CD4-positive, alpha-beta memory T cell (primary cell): ENCODE measurements at regions of chr2 and their contacts with region 1.

Region 1: DNA sequence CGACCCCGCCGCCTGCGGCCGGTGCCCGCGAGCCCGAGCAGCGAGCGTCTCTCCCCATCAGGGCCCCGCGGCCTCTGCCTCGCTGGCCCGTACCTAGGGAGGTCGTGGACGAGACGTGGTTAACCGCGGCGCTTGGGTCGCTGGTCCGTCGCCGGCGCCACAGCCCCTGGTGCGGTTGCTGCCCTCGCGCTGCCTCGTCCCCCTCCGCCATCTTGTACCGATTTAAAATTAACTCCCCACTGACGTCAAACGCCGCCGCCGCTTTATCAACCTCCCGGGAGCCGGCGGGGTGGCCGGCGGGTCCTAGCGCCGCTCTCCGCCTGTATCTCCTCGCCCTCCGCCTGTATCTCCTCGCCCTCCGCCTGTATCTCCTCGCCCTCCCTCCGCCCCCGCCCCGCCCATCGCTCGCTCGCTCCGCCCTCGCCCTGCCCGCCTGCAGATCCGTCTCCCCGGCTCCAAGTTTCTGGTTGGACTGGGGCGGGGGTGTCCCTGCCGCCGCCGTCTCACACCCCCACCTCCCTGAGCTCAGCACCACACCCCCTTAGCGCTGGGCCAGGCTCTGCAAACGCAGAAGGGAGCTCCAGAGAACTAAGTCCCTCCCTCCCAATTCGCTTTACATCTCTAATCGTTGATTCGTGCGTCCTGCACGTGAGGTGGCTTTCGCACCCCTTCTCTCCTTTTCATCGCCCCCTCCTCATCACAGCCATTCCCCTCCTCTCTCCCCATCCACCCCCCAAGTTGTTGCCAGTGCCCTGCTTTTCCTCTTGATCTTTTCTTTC is at the start of gene ATL2:
- DNase-seq: peak; percentile 91 to 97 (median 94)
- H3K4me3 ChIP-seq: peak within 1 kb of the TSS; percentile 67 to 85
- H3K4me3 Mint-ChIP-seq: peak within 1 kb of the TSS; percentile 93 to 100 (median 96)
- H3K27ac ChIP-seq: peak within 1 kb of the TSS; percentile 89
- H3K27ac Mint-ChIP-seq: peak within 1 kb of the TSS; percentile 90 to 98 (median 97)
- H3K4me1 ChIP-seq: peaks cover 63% of the 10 kb centered on the region
- H3K4me1 Mint-ChIP-seq: peaks cover 45 to 81% (median 65%) of the 10 kb centered on the region in 4 donors
- H3K27me3 ChIP-seq: no peaks in the 10 kb centered on the region
- H3K27me3 Mint-ChIP-seq: no peaks in the 10 kb centered on the region
- total RNA-seq, gene ATL2: 51.5 to 64.3 TPM

Region 2: GRCh38 chr2:37324786-37325624 is 1052.2 kb before region 1 on chr2 and contains the start of gene PRKD3:
- CTCF ChIA-PET with region 1: no interaction called
- POLR2A ChIA-PET with region 1: no interaction called
- intact Hi-C with region 1: loop called (anchors 10 kb)
- DNase-seq: peak; percentile 70 to 74 (median 73)
- H3K4me3 ChIP-seq: peak within 1 kb of the TSS; percentile 72 to 85
- H3K4me3 Mint-ChIP-seq: peak within 1 kb of the TSS; percentile 97 to 99 (median 98)
- H3K27ac ChIP-seq: peak within 1 kb of the TSS; percentile 39
- H3K27ac Mint-ChIP-seq: peak within 1 kb of the TSS; percentile 93 to 98 (median 98)
- H3K4me1 ChIP-seq: peaks cover 36% of the 10 kb centered on the region
- H3K4me1 Mint-ChIP-seq: peaks cover 19 to 44% (median 27%) of the 10 kb centered on the region in 4 donors
- H3K27me3 ChIP-seq: no peaks in the 10 kb centered on the region
- H3K27me3 Mint-ChIP-seq: peaks cover 6 to 8% of the 10 kb centered on the region in 2 donors
- total RNA-seq, gene PRKD3: 34.6 to 37.7 TPM

Region 3: DNA sequence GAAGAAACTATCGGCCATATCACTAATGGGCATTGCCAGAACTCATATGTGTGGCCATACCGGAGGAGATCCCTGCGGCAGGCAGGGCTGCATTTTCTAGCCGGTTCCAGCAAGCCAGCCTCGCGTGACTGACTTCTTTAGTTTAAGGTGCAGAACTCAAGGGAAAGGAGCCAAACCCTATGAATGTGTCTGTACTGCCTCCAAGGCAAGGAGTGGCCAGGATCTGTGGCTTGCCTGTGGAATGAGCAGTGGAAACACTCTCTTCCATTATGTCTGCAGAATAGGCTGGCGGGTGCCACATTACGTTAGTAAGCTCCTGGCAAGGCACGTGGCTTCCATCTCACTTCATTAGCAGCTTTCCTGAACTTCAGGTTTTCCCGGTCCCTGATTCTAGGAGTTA is 137.8 kb before region 1 on chr2:
- CTCF ChIA-PET with region 1: no interaction called
- POLR2A ChIA-PET with region 1: no interaction called
- intact Hi-C with region 1: no loop called
- DNase-seq: no peak
- H3K4me3 ChIP-seq: no peak overlapping the region
- H3K4me3 Mint-ChIP-seq: no peak overlapping the region
- H3K27ac ChIP-seq: no peak overlapping the region
- H3K27ac Mint-ChIP-seq: peak overlapping the region in 1 of 7 donors; percentile 21
- H3K4me1 ChIP-seq: no peaks in the 10 kb centered on the region
- H3K4me1 Mint-ChIP-seq: no peaks in the 10 kb centered on the region
- H3K27me3 ChIP-seq: no peaks in the 10 kb centered on the region
- H3K27me3 Mint-ChIP-seq: peaks cover 4 to 13% of the 10 kb centered on the region in 2 donors

Region 4: DNA sequence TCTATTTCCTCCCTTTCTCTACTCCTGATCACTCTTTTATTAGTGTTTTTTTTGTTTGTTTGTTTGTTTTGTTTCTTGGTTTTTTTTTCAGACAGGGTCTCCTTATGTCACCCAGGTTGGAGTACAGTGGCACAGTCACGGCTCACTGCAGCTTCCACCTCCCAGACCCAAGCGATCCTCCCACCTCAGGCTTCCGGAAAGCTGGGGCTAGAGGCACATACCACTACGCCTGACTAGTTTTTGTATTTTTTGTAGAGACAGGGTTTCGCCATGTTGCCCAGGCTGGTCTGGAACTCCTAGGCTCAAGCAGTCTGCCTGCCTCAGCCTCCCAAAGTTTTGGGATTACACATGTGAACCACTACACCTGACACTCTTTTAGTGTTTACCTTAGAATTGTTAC is 122.4 kb before region 1 on chr2:
- CTCF ChIA-PET with region 1: no interaction called
- POLR2A ChIA-PET with region 1: no interaction called
- intact Hi-C with region 1: no loop called
- DNase-seq: no peak
- H3K4me3 ChIP-seq: no peak overlapping the region
- H3K4me3 Mint-ChIP-seq: no peak overlapping the region
- H3K27ac ChIP-seq: no peak overlapping the region
- H3K27ac Mint-ChIP-seq: no peak overlapping the region
- H3K4me1 ChIP-seq: no peaks in the 10 kb centered on the region
- H3K4me1 Mint-ChIP-seq: no peaks in the 10 kb centered on the region
- H3K27me3 ChIP-seq: no peaks in the 10 kb centered on the region
- H3K27me3 Mint-ChIP-seq: peaks cover 1 to 4% of the 10 kb centered on the region in 2 donors

Region 5: DNA sequence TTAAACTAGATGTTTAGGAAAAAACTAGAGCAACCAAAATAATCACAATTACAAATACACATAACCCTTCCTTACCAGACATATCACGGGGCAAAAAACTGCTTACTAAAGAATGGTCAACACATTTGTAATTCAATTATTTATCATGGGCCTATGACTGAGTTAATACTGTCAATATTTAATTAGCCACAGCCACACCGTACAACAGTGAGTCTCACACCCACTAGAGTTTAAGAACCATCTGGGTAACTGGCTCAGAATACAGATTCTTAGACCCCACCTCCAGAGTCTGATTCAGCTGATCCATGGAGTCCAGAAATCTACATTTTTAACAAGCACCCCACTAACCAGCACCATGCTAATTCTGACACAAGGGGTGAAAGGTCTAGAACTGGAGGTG is 15.0 kb before region 1 on chr2:
- CTCF ChIA-PET with region 1: interaction called, 20 read pairs
- POLR2A ChIA-PET with region 1: interaction called, 3 read pairs
- intact Hi-C with region 1: no loop called
- DNase-seq: no peak
- H3K4me3 ChIP-seq: no peak overlapping the region
- H3K4me3 Mint-ChIP-seq: no peak overlapping the region
- H3K27ac ChIP-seq: no peak overlapping the region
- H3K27ac Mint-ChIP-seq: no peak overlapping the region
- H3K4me1 ChIP-seq: peaks cover 16% of the 10 kb centered on the region
- H3K4me1 Mint-ChIP-seq: peaks cover 23 to 44% (median 31%) of the 10 kb centered on the region in 4 donors
- H3K27me3 ChIP-seq: no peaks in the 10 kb centered on the region
- H3K27me3 Mint-ChIP-seq: no peaks in the 10 kb centered on the region

Region 6: DNA sequence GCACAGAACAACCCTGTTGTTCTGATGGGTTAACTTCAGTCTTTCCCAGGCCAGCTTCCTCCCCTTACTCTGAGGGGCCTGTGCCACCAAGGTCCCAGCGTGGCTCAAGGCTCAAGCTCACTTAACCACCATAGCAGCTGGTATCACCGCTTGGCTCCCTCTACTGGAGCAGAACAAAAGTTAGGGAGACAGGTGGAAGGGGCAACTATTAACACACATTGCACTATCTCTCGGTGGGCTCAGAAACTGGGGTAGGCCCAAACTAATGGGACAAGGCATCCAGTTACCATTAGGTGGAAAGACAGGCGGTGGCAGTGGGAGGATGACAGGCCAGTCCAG is 88.5 kb after region 1 on chr2:
- CTCF ChIA-PET with region 1: interaction called, 6 read pairs
- POLR2A ChIA-PET with region 1: no interaction called
- intact Hi-C with region 1: loop called (anchors 2 kb)
- DNase-seq: peak in 4 of 5 donors; percentile 5 to 14 (median 7)
- H3K4me3 ChIP-seq: no peak overlapping the region
- H3K4me3 Mint-ChIP-seq: no peak overlapping the region
- H3K27ac ChIP-seq: no peak overlapping the region
- H3K27ac Mint-ChIP-seq: no peak overlapping the region
- H3K4me1 ChIP-seq: no peaks in the 10 kb centered on the region
- H3K4me1 Mint-ChIP-seq: peaks cover 0 to 2% (median 0%) of the 10 kb centered on the region in 4 donors
- H3K27me3 ChIP-seq: no peaks in the 10 kb centered on the region
- H3K27me3 Mint-ChIP-seq: peaks cover 0 to 6% of the 10 kb centered on the region in 2 donors

Region 7: GRCh38 chr2:38665854-38666555 is 288.8 kb after region 1 on chr2 and contains the start of gene GALM:
- CTCF ChIA-PET with region 1: no interaction called
- POLR2A ChIA-PET with region 1: no interaction called
- intact Hi-C with region 1: no loop called
- DNase-seq: peak; percentile 51 to 68 (median 62)
- H3K4me3 ChIP-seq: peak within 1 kb of the TSS; percentile 63 to 74
- H3K4me3 Mint-ChIP-seq: peak within 1 kb of the TSS; percentile 81 to 97 (median 94)
- H3K27ac ChIP-seq: peak within 1 kb of the TSS; percentile 73
- H3K27ac Mint-ChIP-seq: peak within 1 kb of the TSS; percentile 93 to 100 (median 98)
- H3K4me1 ChIP-seq: peaks cover 73% of the 10 kb centered on the region
- H3K4me1 Mint-ChIP-seq: peaks cover 47 to 80% (median 64%) of the 10 kb centered on the region in 4 donors
- H3K27me3 ChIP-seq: no peaks in the 10 kb centered on the region
- H3K27me3 Mint-ChIP-seq: no peaks in the 10 kb centered on the region
- total RNA-seq, gene GALM: 35.5 to 35.8 TPM

Region 8: DNA sequence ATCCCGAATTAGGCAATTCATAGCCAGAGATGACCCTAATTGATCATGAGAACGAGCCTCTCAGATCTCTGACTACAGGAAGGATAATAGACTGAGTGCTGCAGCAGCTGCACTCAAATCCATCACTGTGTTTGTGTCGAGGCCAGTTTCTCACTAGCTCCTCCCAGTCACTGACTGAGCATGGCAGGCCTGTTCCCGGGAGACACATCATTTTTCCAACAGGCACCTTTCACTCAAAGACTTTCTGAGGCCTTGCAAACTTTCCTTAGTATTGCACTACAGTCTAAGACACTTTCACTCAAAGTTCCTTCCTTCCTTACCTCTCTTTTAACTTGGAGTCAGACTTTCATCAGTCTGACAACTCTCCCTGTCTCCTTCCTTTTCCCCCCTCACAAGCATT is 729.9 kb after region 1 on chr2:
- CTCF ChIA-PET with region 1: no interaction called
- POLR2A ChIA-PET with region 1: no interaction called
- intact Hi-C with region 1: no loop called
- DNase-seq: no peak
- H3K4me3 ChIP-seq: no peak overlapping the region
- H3K4me3 Mint-ChIP-seq: peak overlapping the region in 3 of 8 donors; percentile 45 to 57 (median 53)
- H3K27ac ChIP-seq: no peak overlapping the region
- H3K27ac Mint-ChIP-seq: peak overlapping the region in 6 of 7 donors; percentile 43 to 83 (median 70)
- H3K4me1 ChIP-seq: peaks cover 72% of the 10 kb centered on the region
- H3K4me1 Mint-ChIP-seq: peaks cover 46 to 91% (median 66%) of the 10 kb centered on the region in 4 donors
- H3K27me3 ChIP-seq: no peaks in the 10 kb centered on the region
- H3K27me3 Mint-ChIP-seq: no peaks in the 10 kb centered on the region